Activated CD4-positive, alpha-beta T cell treated with anti-CD3 and anti-CD28 coated beads, Interleukin-2, amount 10 ng/mL, durations not matched to agents 24 days and 14 days (primary cell): ENCODE measurements at regions of chr11 and their contacts with region 1.

Region 1: GRCh38 chr11:73982969-73983740 is 512 bp upstream of the UCP2 start:
- DNase-seq: peak; percentile 98
- H3K4me3 Mint-ChIP-seq: peak overlapping the region; percentile 95
- H3K27ac Mint-ChIP-seq: peak overlapping the region; percentile 99
- H3K4me1 Mint-ChIP-seq: peaks cover 53% of the 10 kb centered on the region
- H3K27me3 Mint-ChIP-seq: no peaks in the 10 kb centered on the region

Region 2: DNA sequence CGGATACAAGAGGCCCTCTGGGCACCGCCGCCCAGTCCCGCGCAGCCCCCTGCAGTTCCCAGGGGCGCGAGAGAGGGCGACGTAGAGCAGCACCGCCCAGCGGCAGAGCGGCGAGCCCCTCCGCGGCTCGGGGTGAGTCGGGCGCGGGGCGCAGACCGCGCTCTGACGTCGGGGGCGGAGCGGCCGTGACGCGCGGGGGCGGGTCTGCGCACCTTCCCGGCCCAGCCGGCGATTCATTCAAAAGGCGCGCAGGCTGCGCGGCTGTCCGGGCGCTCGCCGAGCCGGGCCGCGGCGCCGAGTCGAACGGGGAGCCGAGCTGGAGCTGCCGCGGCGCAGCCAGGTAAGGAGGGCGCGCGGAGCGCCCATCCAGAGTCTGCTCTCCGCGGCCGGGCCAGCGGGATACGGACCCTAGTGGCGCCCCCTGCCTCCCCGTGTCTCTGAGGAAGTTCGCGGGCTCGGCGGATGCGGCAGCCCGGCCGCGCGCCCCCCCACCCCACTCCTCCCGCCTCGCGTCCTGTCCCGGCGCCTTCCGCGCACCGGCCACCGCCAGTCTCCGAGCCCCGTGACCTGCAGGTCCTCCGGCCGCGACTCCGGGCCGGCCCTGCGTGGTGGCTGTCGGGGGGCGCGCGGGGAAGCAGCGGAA is 606.9 kb before region 1 on chr11 and contains the start of gene RELT:
- intact Hi-C with region 1: loop called (anchors 2 kb)
- DNase-seq: peak; percentile 99
- H3K4me3 Mint-ChIP-seq: peak within 1 kb of the TSS; percentile 94
- H3K27ac Mint-ChIP-seq: peak within 1 kb of the TSS; percentile 95
- H3K4me1 Mint-ChIP-seq: peaks cover 35% of the 10 kb centered on the region
- H3K27me3 Mint-ChIP-seq: no peaks in the 10 kb centered on the region
- total RNA-seq, gene RELT: 35.0 and 38.5 TPM in 2 replicates

Region 3: DNA sequence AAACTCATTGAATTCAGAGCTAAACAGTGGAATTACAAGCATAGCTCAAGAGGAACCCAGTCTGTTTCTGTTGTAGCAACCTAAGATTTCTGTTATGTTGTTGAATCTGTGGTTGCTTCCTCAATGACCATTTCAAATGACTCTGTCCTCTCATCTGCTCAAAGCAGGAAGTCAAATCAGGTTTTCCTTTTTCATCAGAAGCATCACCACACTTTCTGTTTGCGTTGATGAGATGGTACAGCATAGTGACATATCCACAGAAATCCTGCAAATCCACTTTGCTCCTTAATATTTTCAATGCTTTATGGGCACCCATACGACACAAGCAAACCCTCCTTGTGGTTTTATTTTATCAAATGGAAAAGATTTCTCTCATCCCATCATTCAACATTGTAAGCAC is 12.1 kb after region 1 on chr11:
- intact Hi-C with region 1: loop called (anchors 1 kb)
- DNase-seq: peak; percentile 86
- H3K4me3 Mint-ChIP-seq: peak overlapping the region; percentile 80
- H3K27ac Mint-ChIP-seq: peak overlapping the region; percentile 97
- H3K4me1 Mint-ChIP-seq: peaks cover 41% of the 10 kb centered on the region
- H3K27me3 Mint-ChIP-seq: no peaks in the 10 kb centered on the region

Region 4: GRCh38 chr11:74011360-74012073 is 28.4 kb after region 1 on chr11:
- intact Hi-C with region 1: loop called (anchors 1 kb)
- DNase-seq: peak; percentile 89
- H3K4me3 Mint-ChIP-seq: peak overlapping the region; percentile 44
- H3K27ac Mint-ChIP-seq: peak overlapping the region; percentile 95
- H3K4me1 Mint-ChIP-seq: peaks cover 76% of the 10 kb centered on the region
- H3K27me3 Mint-ChIP-seq: no peaks in the 10 kb centered on the region

Region 5: DNA sequence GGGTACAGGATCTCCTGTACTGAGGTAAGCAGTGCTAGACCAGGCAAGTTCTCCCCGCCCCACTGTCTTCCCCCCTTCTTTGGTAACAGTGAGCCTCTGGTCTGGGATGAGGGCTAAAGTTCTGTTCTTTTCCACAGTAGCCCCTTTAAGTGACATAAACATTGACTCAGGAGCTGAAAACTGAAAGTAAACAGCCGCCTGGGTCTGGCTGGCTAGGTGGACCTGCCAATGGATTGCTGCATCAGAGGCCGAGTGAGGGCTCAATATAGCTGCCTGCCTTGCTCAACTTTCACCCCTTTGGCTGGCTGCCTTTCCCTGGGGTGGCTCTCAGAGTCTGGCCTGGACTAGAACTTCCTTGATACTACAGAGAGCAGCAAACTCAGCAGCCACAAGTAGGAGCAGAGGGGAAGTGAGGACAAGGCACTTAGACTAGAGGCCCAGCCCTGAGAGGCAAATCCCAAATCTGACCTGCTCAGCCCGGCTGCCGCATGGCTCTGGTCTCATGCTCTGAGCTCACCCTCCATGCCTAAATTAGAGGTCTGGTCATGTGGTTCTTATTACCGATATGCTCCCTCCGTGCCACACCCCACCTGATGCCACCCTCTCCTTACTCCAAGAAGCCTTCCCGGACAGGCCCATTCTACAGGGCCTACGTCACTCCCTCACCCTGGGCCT is 35.3 kb after region 1 on chr11:
- intact Hi-C with region 1: loop called (anchors 1 kb)
- DNase-seq: peak; percentile 58
- H3K4me3 Mint-ChIP-seq: peak overlapping the region; percentile 21
- H3K27ac Mint-ChIP-seq: no peak overlapping the region
- H3K4me1 Mint-ChIP-seq: peaks cover 42% of the 10 kb centered on the region
- H3K27me3 Mint-ChIP-seq: no peaks in the 10 kb centered on the region